Prostate gland (tissue), 2 donors: ENCODE measurements at regions of chr6 and their contacts with region 1.

Region 1: GRCh38 chr6:97189767-97190166 is 93.2 kb downstream of the MMS22L start:
- DNase-seq: no peak
- H3K4me3 ChIP-seq: no peak overlapping the region
- H3K27ac ChIP-seq: no peak overlapping the region
- H3K4me1 ChIP-seq: no peaks in the 10 kb centered on the region
- H3K27me3 ChIP-seq: no peaks in the 10 kb centered on the region
- CTCF ChIP-seq: no peak
- POLR2A ChIP-seq: no peak

Region 2: GRCh38 chr6:97177905-97178304 is 11.9 kb before region 1 on chr6:
- intact Hi-C with region 1: no loop called
- DNase-seq: no peak
- H3K4me3 ChIP-seq: no peak overlapping the region
- H3K27ac ChIP-seq: no peak overlapping the region
- H3K4me1 ChIP-seq: no peaks in the 10 kb centered on the region
- H3K27me3 ChIP-seq: no peaks in the 10 kb centered on the region
- CTCF ChIP-seq: no peak
- POLR2A ChIP-seq: no peak

Region 3: GRCh38 chr6:97394160-97394748 is 204.5 kb after region 1 on chr6:
- intact Hi-C with region 1: loop called (anchors 5 kb)
- DNase-seq: peak; percentile 23
- H3K4me3 ChIP-seq: no peak overlapping the region
- H3K27ac ChIP-seq: no peak overlapping the region
- H3K4me1 ChIP-seq: no peaks in the 10 kb centered on the region
- H3K27me3 ChIP-seq: no peaks in the 10 kb centered on the region
- CTCF ChIP-seq: peak; percentile 62 to 76 (median 70)
- POLR2A ChIP-seq: no peak